ENCODE measurements at regions of chr16 and their contacts with region 1.

Region 1: DNA sequence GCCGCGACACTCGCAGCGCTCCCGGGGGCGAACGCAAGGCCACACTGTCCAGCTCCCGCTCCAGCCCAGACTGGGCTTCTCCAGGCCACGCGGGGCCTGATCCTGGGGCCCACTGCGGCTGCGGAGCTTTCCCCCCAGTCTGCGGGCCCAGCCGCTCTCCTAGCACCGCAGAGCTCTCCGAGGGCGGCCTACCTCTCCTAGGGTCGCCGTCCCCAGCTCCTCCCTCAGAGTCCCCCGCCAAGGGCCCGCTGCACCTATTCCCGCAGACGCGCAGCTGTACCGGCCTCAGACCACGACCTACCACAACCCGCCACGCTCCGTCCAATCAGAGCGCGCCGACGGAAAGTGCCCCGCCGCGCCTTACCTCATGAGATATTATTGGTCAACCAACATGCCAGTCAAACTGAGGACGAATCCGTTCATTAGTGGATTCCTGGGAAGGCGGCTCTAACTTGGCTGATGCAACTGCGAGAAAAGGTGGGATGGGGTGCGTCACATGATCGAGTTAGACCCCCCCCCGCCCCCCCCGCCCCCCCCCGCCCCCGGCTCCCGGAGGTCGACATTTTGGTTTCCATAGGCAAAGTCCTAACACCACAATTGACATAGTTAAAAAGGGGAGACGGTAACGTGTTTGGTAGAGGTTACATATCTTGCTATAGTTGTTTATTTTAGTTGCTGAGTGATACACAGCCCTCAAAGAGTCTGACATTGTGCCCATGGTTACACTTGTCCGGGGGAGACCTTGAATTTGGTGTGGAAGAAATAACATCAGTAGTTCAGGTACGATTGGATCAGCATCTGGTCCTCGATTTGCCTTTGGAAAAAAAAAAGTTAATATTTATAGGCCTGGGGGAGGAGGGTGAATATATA is at the start of gene AARS1:
- DNase-seq: peak; percentile 96
- ATAC-seq: peak; percentile 99
- H3K4me3 Mint-ChIP-seq: peak within 1 kb of the TSS; percentile 94
- H3K27ac Mint-ChIP-seq: peak within 1 kb of the TSS; percentile 98
- H3K4me1 Mint-ChIP-seq: peaks cover 6% of the 10 kb centered on the region; the same call in 1 of the 2 replicates
- H3K27me3 Mint-ChIP-seq: no peaks in the 10 kb centered on the region
- CTCF ChIP-seq: no peak
- total RNA-seq, gene AARS1: 174 to 214 TPM (median 174 TPM) in 3 replicates

Region 2: DNA sequence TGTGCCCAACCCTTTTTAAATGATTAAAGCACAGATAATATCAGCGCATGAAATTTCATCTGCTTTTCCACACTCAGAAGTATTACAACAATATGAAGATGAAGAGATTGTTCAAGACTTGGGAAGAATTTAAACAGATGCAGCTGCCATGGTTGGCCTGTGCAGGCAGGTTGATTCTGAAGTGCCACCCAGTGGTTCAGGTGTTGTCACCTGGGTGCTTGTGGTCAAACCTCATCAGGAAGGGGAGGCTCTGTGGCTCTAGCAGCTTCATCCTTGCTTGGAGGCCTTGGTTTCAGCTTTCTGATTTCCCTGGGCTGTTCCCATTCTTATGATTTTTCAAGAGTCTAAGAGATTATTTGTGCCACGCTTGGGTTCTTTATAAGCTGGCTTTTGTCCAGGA is 138.1 kb before region 1 on chr16:
- CTCF ChIA-PET with region 1: no interaction called
- POLR2A ChIA-PET with region 1: no interaction called
- DNase-seq: no peak
- ATAC-seq: no peak
- H3K4me3 Mint-ChIP-seq: no peak overlapping the region
- H3K27ac Mint-ChIP-seq: no peak overlapping the region
- H3K4me1 Mint-ChIP-seq: no peaks in the 10 kb centered on the region
- H3K27me3 Mint-ChIP-seq: no peaks in the 10 kb centered on the region
- CTCF ChIP-seq: no peak

Region 3: GRCh38 chr16:70251629-70252354 is 37.7 kb before region 1 on chr16 and contains the start of gene EXOSC6:
- CTCF ChIA-PET with region 1: interaction called, 26 read pairs
- POLR2A ChIA-PET with region 1: interaction called, 9 read pairs
- DNase-seq: peak; percentile 92
- ATAC-seq: peak; percentile 87
- H3K4me3 Mint-ChIP-seq: peak within 1 kb of the TSS; percentile 78
- H3K27ac Mint-ChIP-seq: peak within 1 kb of the TSS; percentile 90
- H3K4me1 Mint-ChIP-seq: peaks cover 6% of the 10 kb centered on the region
- H3K27me3 Mint-ChIP-seq: no peaks in the 10 kb centered on the region; the same call in 1 of the 2 replicates
- CTCF ChIP-seq: peak; percentile 84
- total RNA-seq, gene EXOSC6: 26.0 to 27.6 TPM (median 27.3 TPM) in 3 replicates

Region 4: DNA sequence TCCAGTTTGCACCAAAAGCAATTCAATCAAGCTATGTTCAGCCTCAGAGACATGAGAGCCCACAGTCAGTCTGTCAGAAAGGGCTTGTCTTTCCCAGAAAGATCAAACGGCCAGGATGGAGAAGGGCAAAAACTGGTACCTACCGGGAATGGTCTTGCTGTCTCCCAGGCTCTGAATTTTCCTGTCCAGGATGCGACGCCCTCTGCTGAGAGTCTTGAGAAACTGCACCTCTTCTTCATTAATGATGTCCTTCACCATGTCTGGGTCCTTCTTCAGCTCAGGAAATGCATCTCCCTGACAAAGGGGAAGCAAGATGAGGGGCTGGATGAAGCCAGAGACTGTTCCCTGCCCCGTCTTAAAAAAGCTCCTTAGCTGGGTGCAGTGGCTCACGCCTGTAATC is 21.9 kb before region 1 on chr16:
- CTCF ChIA-PET with region 1: interaction called, 15 read pairs
- POLR2A ChIA-PET with region 1: interaction called, 3 read pairs
- DNase-seq: peak; percentile 61
- ATAC-seq: peak; percentile 82
- H3K4me3 Mint-ChIP-seq: no peak overlapping the region
- H3K27ac Mint-ChIP-seq: peak overlapping the region; percentile 63; the same call in 1 of the 2 replicates
- H3K4me1 Mint-ChIP-seq: no peaks in the 10 kb centered on the region
- H3K27me3 Mint-ChIP-seq: no peaks in the 10 kb centered on the region
- CTCF ChIP-seq: peak; percentile 55; the same call in 1 of the 2 replicates